GM18951 (cell line): ENCODE measurements at regions of chr2 and their contacts with region 1.

Region 1: GRCh38 chr2:190069936-190070696 is 7.6 kb upstream of the MSTN start:
- POLR2A ChIP-seq: no peak

Region 2: GRCh38 chr2:189661148-189661956 is 408.8 kb before region 1 on chr2 and contains the start of gene ASNSD1:
- in situ Hi-C with region 1: loop called (anchors 25 kb)
- POLR2A ChIP-seq: peak; percentile 95

Region 3: DNA sequence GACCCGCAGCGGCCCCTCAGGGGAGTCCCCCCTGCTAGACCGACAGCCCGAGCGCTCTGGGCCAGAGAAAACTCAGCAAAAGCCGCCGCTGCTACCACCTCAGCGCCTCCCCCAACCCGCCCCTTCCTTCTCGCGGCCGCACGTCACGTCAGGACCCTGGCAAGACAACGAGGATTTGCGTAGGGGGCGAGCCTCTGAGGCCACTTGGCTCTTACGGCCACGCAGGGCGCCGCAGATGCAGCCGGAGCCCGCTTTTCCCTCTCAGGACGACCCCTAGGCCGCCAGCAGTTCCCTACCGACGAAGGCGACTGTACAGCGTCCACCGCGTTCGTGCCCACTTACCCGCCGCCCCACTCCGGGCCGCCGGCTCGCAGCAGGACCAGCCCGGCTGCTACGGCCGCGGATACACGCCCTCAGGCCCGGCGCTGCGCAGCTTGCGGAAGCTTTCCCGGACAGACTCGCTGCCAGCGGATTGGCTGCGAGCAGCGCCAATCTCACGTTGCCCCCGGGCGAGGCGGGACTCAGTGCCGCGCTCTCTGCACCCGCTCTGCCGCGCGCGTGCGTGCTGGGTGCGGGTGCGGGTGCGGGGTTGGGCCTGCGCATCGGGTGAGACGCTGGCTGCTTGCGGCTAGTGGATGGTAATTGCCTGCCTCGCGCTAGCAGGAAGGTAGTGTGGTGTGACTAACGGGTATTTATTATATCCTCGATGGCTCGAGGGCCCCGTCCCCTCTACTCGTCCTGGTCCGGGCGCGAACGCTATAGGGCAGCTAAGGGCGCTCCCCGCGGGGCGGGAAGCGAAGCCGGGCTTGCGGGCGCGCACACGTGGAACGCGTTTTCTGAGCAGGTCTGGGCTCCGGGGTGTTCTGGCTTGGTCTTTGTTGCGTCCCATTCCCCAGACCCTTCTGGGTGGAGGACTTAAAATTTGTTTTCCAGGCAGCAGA is 285.9 kb before region 1 on chr2 and contains the starts of genes ORMDL1 and PMS1:
- in situ Hi-C with region 1: loop called (anchors 25 kb)
- POLR2A ChIP-seq: peak; percentile 97